Activated CD4-positive, alpha-beta memory T cell treated with anti-CD3 and anti-CD28 coated beads for 36 hours (primary cell): ENCODE measurements at regions of chrX and their contacts with region 1.

Region 1: DNA sequence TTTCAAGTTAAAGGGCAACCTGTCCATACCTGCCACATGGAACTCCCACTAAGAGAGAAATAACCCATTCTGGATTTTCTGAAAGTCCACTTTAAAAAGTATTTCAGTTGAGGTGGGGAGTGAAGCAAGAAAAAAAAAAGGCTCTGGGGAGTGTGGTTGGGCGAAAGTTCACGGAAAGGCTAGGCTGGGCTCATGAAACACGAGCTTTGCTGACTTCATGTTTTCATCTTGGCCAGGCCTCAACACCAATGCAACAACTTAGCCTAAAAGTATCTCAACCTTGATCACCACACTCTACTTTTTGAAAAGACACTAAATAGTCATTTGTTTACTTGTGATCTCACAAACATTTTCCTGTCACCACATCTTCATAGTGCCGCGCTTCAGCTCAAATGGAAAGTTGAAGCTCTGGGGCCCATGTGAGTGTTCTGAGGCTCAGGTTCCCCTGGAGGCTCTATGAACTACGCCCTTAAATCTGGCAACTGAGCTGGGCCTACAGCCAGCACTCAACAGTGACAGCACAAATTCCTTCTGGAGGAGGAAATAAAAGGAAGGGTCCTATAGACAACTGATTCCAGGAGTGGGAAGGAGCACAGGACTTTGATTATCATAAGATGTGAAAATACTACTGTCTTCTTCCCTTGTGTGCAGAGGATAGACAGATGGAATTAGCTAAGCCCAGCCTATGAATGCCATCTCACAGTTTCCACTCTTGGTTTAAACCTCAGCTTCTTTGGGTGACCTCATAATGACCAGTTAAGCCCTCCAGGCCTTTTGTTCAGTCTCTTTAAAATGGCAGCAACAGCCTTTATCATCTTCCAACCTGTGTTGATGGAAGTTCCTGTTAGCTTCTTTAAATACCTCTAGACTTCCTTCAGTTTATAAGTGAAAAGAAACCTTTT is 5.1 kb downstream of the CD40LG start:
- DNase-seq: peak; percentile 62
- H3K4me3 Mint-ChIP-seq: peak overlapping the region; percentile 93
- H3K27ac Mint-ChIP-seq: peak overlapping the region; percentile 99
- H3K4me1 Mint-ChIP-seq: peaks cover 54% of the 10 kb centered on the region
- H3K27me3 Mint-ChIP-seq: no peaks in the 10 kb centered on the region

Region 2: GRCh38 chrX:136608295-136609171 is 44.5 kb before region 1 on chrX:
- CTCF ChIA-PET with region 1: interaction called, 7 read pairs
- POLR2A ChIA-PET with region 1: interaction called, 12 read pairs
- intact Hi-C with region 1: no loop called
- DNase-seq: peak; percentile 72
- H3K4me3 Mint-ChIP-seq: peak overlapping the region; percentile 41
- H3K27ac Mint-ChIP-seq: peak overlapping the region; percentile 61
- H3K4me1 Mint-ChIP-seq: peaks cover 57% of the 10 kb centered on the region
- H3K27me3 Mint-ChIP-seq: no peaks in the 10 kb centered on the region

Region 3: GRCh38 chrX:136616987-136617685 is 35.9 kb before region 1 on chrX:
- CTCF ChIA-PET with region 1: interaction called, 3 read pairs
- POLR2A ChIA-PET with region 1: interaction called, 61 read pairs
- intact Hi-C with region 1: no loop called
- DNase-seq: peak; percentile 40
- H3K4me3 Mint-ChIP-seq: peak overlapping the region; percentile 49
- H3K27ac Mint-ChIP-seq: peak overlapping the region; percentile 92
- H3K4me1 Mint-ChIP-seq: peaks cover 53% of the 10 kb centered on the region
- H3K27me3 Mint-ChIP-seq: no peaks in the 10 kb centered on the region

Region 4: GRCh38 chrX:136626237-136626636 is 26.8 kb before region 1 on chrX:
- CTCF ChIA-PET with region 1: interaction called, 3 read pairs
- POLR2A ChIA-PET with region 1: interaction called, 61 read pairs
- intact Hi-C with region 1: no loop called
- DNase-seq: no peak
- H3K4me3 Mint-ChIP-seq: no peak overlapping the region
- H3K27ac Mint-ChIP-seq: peak overlapping the region; percentile 82
- H3K4me1 Mint-ChIP-seq: peaks cover 89% of the 10 kb centered on the region
- H3K27me3 Mint-ChIP-seq: no peaks in the 10 kb centered on the region

Region 5: DNA sequence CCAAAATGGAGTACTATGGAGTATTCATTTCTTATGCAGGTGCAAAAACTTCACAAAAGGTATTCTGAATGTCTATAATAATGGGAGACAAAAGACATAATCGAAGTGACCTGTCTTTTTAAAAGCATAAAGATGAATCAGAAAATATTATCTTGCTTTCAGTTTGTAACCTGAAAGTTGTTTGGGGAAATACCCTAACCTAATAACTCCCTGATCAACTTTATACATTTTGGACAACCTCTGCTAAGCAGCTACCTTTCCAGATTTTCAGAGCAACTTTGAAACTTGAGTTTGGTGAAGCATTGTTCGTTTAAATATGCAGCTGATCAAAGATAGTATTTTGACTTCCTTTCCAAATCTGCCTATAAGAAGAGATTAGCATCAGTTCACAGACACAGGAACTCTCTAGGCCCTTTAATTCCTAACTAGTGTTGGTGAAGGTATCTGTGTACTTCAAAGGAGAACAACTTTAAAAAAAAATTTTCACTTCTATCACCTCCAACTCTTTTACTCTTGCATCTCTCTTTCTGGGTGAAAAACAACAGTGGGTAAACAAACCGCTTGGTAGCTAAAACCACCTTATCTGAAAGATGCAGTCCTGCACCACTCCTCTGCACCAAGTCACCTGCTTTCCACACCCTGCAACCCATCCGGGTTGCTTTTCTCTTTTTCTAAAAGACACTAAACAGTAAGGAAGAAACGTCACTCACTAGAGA is 21.4 kb after region 1 on chrX:
- CTCF ChIA-PET with region 1: interaction called, 4 read pairs
- POLR2A ChIA-PET with region 1: interaction called, 6 read pairs
- intact Hi-C with region 1: loop called (anchors 2 kb)
- DNase-seq: no peak
- H3K4me3 Mint-ChIP-seq: peak overlapping the region; percentile 55
- H3K27ac Mint-ChIP-seq: peak overlapping the region; percentile 73
- H3K4me1 Mint-ChIP-seq: peaks cover 90% of the 10 kb centered on the region
- H3K27me3 Mint-ChIP-seq: no peaks in the 10 kb centered on the region

Region 6: DNA sequence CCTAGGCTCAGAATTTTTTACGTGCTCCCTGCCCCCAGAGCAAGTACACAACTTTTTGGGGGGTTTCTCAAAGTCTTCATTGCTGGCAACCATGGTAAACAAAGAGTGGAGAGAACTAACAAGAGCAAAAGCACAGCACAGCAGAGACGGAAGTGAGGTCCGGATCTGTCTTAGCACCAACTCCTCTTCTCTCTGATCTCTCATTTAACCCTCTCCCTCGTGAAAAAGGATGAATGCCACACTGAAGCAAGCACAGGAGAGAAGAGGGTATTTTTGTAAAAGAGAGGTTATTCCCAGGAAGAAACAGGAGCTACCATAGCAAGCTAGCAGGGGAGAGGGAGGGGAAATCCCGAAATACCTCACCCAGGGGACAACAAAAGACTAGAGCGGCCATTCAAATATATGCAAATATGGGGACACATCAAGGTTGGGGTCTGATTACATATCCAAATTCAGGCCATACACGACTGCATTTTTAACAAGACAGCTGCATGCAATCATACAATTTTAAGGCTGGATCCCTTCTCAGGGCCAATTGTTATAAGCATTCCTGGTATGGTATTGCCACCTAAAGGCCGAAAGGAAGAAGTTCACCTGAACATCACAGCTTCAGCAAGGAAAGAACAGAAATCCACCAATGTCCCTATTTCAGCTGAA is 41.5 kb after region 1 on chrX:
- CTCF ChIA-PET with region 1: interaction called, 10 read pairs
- POLR2A ChIA-PET with region 1: interaction called, 8 read pairs
- intact Hi-C with region 1: loop called (anchors 2 kb)
- DNase-seq: no peak
- H3K4me3 Mint-ChIP-seq: peak overlapping the region; percentile 77
- H3K27ac Mint-ChIP-seq: peak overlapping the region; percentile 97
- H3K4me1 Mint-ChIP-seq: peaks cover 75% of the 10 kb centered on the region
- H3K27me3 Mint-ChIP-seq: no peaks in the 10 kb centered on the region

Region 7: DNA sequence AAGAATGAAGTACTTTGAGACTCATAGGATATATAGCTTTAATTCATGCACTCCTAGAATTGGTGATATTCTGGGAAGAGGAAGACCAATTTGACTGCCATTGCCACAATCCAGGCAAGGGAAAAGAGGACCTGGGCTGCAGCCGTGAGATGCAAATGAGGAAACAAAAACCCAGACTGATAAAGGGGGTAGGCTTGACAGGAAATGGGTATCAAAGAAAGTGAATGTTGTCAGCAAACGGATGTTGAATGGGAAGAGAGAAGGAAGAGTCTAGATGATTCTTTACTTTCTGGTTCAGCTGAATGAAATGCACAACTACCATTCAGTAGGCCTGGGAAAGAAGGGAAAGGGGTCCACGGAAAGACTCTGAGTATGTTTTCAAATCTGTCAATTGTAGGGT is 144.7 kb after region 1 on chrX:
- CTCF ChIA-PET with region 1: no interaction called
- POLR2A ChIA-PET with region 1: no interaction called
- intact Hi-C with region 1: no loop called
- DNase-seq: no peak
- H3K4me3 Mint-ChIP-seq: no peak overlapping the region
- H3K27ac Mint-ChIP-seq: no peak overlapping the region
- H3K4me1 Mint-ChIP-seq: peaks cover 8% of the 10 kb centered on the region
- H3K27me3 Mint-ChIP-seq: no peaks in the 10 kb centered on the region

Region 8: DNA sequence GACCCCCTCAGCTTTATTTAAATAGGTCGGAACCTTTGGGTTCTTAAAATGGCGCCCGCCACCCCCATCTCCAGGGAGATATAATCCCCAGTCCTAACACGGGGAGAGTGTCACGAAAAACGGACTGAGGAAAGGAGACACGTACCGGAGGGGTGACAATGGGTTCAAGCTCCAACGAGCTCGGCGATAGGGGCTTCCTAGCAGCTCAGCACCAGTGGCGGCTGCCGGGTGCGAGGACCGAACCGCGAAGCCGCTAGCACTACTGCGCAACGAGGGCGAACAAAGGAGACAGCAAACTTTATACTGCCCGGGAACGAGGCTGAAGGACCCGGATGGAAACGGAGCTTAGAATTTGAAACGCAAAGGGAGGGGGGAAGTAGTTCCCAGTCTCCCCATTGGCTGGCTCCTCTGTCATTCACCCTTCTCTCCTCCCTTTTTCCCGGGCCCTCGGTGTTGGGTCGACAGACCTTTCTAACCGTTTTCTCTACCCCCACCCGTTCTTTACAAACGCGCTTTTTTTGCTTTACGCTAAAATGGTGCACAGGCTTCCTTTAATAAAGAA is 227.5 kb after region 1 on chrX and contains the start of gene RBMX:
- CTCF ChIA-PET with region 1: no interaction called
- POLR2A ChIA-PET with region 1: interaction called, 22 read pairs
- intact Hi-C with region 1: no loop called
- DNase-seq: peak; percentile 93
- H3K4me3 Mint-ChIP-seq: peak within 1 kb of the TSS; percentile 98
- H3K27ac Mint-ChIP-seq: peak within 1 kb of the TSS; percentile 99
- H3K4me1 Mint-ChIP-seq: peaks cover 13% of the 10 kb centered on the region
- H3K27me3 Mint-ChIP-seq: no peaks in the 10 kb centered on the region
- total RNA-seq, gene RBMX: 269 to 271 TPM